ENCODE measurements at regions of chr16 and their contacts with region 1.

Region 1: GRCh38 chr16:11133344-11133943 is 122.6 kb downstream of the SOCS1 start:
- DNase-seq: peak; percentile 65 to 93
- H3K4me3 ChIP-seq: peak overlapping the region in 1 of 2 donors; percentile 16
- H3K27ac ChIP-seq: peak overlapping the region; percentile 71 to 78
- H3K4me1 ChIP-seq: peaks cover 8 to 47% of the 10 kb centered on the region in 2 donors
- H3K27me3 ChIP-seq: no peaks in the 10 kb centered on the region
- CTCF ChIP-seq: no peak

Region 2: GRCh38 chr16:10971560-10971961 is 161.9 kb before region 1 on chr16:
- intact Hi-C with region 1: loop called (anchors 5 kb)
- DNase-seq: peak in 1 of 2 donors; percentile 74
- H3K4me3 ChIP-seq: no peak overlapping the region
- H3K27ac ChIP-seq: peak overlapping the region; percentile 72 to 89
- H3K4me1 ChIP-seq: peaks cover 10 to 24% of the 10 kb centered on the region in 2 donors
- H3K27me3 ChIP-seq: no peaks in the 10 kb centered on the region
- CTCF ChIP-seq: peak; percentile 63 to 83 (median 71)

Region 3: GRCh38 chr16:11079652-11080187 is 53.7 kb before region 1 on chr16:
- intact Hi-C with region 1: loop called (anchors 2 kb)
- DNase-seq: no peak
- H3K4me3 ChIP-seq: no peak overlapping the region
- H3K27ac ChIP-seq: peak overlapping the region; percentile 71 to 86
- H3K4me1 ChIP-seq: peaks cover 6 to 34% of the 10 kb centered on the region in 2 donors
- H3K27me3 ChIP-seq: no peaks in the 10 kb centered on the region
- CTCF ChIP-seq: no peak

Region 4: GRCh38 chr16:11105038-11105903 is 28.2 kb before region 1 on chr16:
- intact Hi-C with region 1: loop called (anchors 2 kb)
- DNase-seq: peak in 1 of 2 donors; percentile 79
- H3K4me3 ChIP-seq: peak overlapping the region in 1 of 2 donors; percentile 18
- H3K27ac ChIP-seq: peak overlapping the region; percentile 31 to 83
- H3K4me1 ChIP-seq: peaks cover 26 to 54% of the 10 kb centered on the region in 2 donors
- H3K27me3 ChIP-seq: no peaks in the 10 kb centered on the region
- CTCF ChIP-seq: no peak

Region 5: GRCh38 chr16:11255737-11256660 is 122.6 kb after region 1 on chr16 and contains the start of gene SOCS1:
- intact Hi-C with region 1: loop called (anchors 10 kb)
- DNase-seq: peak; percentile 43 to 89
- H3K4me3 ChIP-seq: peak within 1 kb of the TSS; percentile 79 to 80
- H3K27ac ChIP-seq: peak within 1 kb of the TSS; percentile 90 to 96
- H3K4me1 ChIP-seq: peaks cover 10 to 25% of the 10 kb centered on the region in 2 donors
- H3K27me3 ChIP-seq: no peaks in the 10 kb centered on the region
- CTCF ChIP-seq: peak; percentile 84 to 97 (median 88)
- total RNA-seq, gene SOCS1: 1.8 TPM

Region 6: GRCh38 chr16:11797166-11797956 is 663.9 kb after region 1 on chr16 and contains the start of gene ZC3H7A:
- intact Hi-C with region 1: loop called (anchors 2 kb)
- DNase-seq: peak; percentile 85 to 98
- H3K4me3 ChIP-seq: peak within 1 kb of the TSS; percentile 70 to 91
- H3K27ac ChIP-seq: peak within 1 kb of the TSS; percentile 97 to 98
- H3K4me1 ChIP-seq: peaks cover 14 to 48% of the 10 kb centered on the region in 2 donors
- H3K27me3 ChIP-seq: no peaks in the 10 kb centered on the region
- CTCF ChIP-seq: peak; percentile 36 to 99 (median 53)
- total RNA-seq, gene ZC3H7A: 56.9 TPM